Common myeloid progenitor, CD34-positive (primary cell): ENCODE measurements at regions of chr1 and their contacts with region 1.

Region 1: DNA sequence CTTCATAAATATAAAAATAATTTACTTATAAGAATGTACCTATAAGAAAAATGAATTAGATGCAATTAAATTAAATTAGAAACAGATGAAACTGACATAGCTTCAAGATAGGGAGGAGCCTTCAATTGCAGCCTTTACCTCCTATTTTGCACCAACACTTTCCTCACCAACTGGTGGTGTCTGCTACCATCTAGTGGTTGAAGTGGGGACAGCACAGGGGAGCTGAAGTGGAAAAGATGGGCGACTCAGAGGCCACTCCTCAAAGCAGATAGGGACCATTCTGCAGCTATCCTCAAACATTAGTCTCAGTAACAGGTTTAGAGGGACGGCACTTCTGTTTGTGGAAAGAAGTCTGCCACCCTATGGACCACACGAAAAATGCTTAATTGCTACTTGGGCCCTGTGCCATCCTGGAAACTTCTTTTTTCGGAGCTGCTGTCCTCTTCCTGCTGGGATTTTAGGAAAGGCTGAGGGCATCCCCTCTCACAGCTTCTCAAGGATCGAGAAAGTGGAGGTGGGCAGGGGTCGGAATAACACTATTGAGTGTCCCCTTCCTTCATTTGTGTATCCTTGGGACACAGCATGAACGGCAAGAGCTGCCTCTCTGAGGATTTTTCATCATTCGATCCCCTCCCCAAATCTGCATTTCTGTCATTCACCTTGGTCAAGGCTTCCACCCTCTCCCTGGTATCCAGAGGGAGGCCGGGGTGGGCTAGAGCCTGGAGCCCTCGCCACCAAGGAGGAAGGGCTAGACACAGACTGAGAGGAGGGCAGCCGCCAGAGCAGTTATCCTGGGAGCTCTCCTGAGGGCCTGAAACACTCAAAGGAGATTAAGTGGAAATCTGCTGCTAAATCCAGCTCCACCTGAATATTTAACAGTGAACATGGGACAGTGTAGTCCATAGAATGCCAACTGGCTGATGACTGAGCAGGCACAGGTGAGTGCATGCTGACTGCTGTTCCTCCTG is 9.6 kb downstream of the PROK1 start:
- DNase-seq: peak; percentile 78 to 91 (median 86)
- H3K4me3 ChIP-seq: no peak overlapping the region
- H3K27ac ChIP-seq: no peak overlapping the region
- H3K4me1 ChIP-seq: no peaks in the 10 kb centered on the region
- H3K27me3 ChIP-seq: peaks cover 0 to 2% (median 0%) of the 10 kb centered on the region in 5 experiments

Region 2: DNA sequence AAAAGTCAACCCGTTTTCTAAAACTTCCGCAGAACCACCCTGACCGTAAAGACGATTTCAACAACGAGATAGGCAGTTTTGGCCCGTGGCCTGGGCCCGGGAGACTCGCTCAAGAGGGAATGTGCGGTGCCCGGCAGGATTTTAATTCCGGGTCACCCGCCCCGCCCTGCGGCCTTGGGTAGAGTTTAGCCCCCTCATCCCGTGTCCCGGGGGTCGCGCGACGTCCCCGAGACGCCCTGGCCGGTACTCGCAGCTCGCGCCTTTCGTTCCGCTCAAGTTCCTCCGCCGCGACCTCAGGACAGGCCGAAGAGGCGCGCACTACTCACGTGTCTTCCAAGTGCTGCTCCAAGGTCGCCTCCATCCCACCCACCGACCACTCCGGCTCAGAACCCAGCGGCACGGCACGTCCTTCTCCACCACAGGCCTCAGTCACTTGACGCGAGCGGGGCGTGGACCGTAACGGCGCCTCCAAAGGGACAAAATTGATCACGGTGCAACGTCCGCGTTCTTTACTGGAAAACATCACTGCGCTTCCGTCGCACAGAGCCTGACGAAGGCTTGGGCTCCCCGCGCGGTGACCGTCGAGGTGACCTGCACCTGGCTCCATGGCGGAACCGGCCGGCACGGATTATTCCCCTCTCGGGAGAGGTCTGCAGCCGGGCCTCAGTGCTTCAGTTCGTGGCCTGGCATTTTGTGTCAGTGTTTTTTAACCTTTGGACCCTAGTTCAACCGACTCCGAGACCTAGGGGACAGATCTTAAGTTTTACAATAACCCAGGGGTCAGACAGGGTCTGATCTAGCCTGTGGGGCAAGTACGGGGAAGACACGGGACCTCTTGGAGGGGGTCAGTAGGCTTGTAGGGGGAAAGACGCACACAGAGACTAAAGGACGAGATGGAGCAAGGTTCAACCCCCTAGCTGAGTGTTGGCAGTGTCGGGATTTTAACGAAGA is 53.0 kb before region 1 on chr1 and contains the start of gene LAMTOR5:
- CTCF ChIA-PET with region 1: interaction called, 494 read pairs
- POLR2A ChIA-PET with region 1: interaction called, 4 read pairs
- DNase-seq: peak; percentile 95 to 97 (median 97)
- H3K4me3 ChIP-seq: peak within 1 kb of the TSS; percentile 84 to 98 (median 93)
- H3K27ac ChIP-seq: peak within 1 kb of the TSS; percentile 89 to 94
- H3K4me1 ChIP-seq: peaks cover 12 to 22% (median 14%) of the 10 kb centered on the region in 4 experiments
- H3K27me3 ChIP-seq: no peaks in the 10 kb centered on the region

Region 3: GRCh38 chr1:110433803-110434202 is 26.7 kb before region 1 on chr1:
- CTCF ChIA-PET with region 1: interaction called, 48 read pairs
- POLR2A ChIA-PET with region 1: no interaction called
- DNase-seq: peak; percentile 49 to 68 (median 65)
- H3K4me3 ChIP-seq: no peak overlapping the region
- H3K27ac ChIP-seq: no peak overlapping the region
- H3K4me1 ChIP-seq: peaks cover 0 to 36% (median 23%) of the 10 kb centered on the region in 4 experiments
- H3K27me3 ChIP-seq: no peaks in the 10 kb centered on the region

Region 4: GRCh38 chr1:110440877-110441276 is 19.7 kb before region 1 on chr1:
- CTCF ChIA-PET with region 1: interaction called, 48 read pairs
- POLR2A ChIA-PET with region 1: interaction called, 3 read pairs
- DNase-seq: no peak
- H3K4me3 ChIP-seq: no peak overlapping the region
- H3K27ac ChIP-seq: no peak overlapping the region
- H3K4me1 ChIP-seq: peaks cover 0 to 23% (median 5%) of the 10 kb centered on the region in 4 experiments
- H3K27me3 ChIP-seq: no peaks in the 10 kb centered on the region

Region 5: GRCh38 chr1:110477041-110477440 is 16.5 kb after region 1 on chr1:
- CTCF ChIA-PET with region 1: interaction called, 11 read pairs
- POLR2A ChIA-PET with region 1: interaction called, 3 read pairs
- DNase-seq: peak in 2 of 3 donors; percentile 40 to 51
- H3K4me3 ChIP-seq: no peak overlapping the region
- H3K27ac ChIP-seq: no peak overlapping the region
- H3K4me1 ChIP-seq: peaks cover 0 to under 1% (median 0%) of the 10 kb centered on the region in 4 experiments
- H3K27me3 ChIP-seq: peaks cover 0 to 4% (median 0%) of the 10 kb centered on the region in 5 experiments

Region 6: GRCh38 chr1:110524311-110525251 is 64.0 kb after region 1 on chr1:
- CTCF ChIA-PET with region 1: no interaction called
- POLR2A ChIA-PET with region 1: no interaction called
- DNase-seq: peak; percentile 70 to 82 (median 79)
- H3K4me3 ChIP-seq: peak overlapping the region in 1 of 7 experiments; percentile 3
- H3K27ac ChIP-seq: no peak overlapping the region
- H3K4me1 ChIP-seq: peaks cover 0 to 6% (median 2%) of the 10 kb centered on the region in 4 experiments
- H3K27me3 ChIP-seq: peaks cover 0 to 30% (median 14%) of the 10 kb centered on the region in 5 experiments